MCF 10A (cell line): ENCODE measurements at regions of chr15 and their contacts with region 1.

Region 1: GRCh38 chr15:34209421-34210282 is at the start of gene KATNBL1:
- DNase-seq: peak; percentile 95
- H3K4me3 Mint-ChIP-seq: peak within 1 kb of the TSS; percentile 80
- H3K27ac Mint-ChIP-seq: peak within 1 kb of the TSS; percentile 93
- H3K4me1 Mint-ChIP-seq: peaks cover 17% of the 10 kb centered on the region
- H3K27me3 Mint-ChIP-seq: no peaks in the 10 kb centered on the region
- CTCF ChIP-seq: peak; percentile 77
- total RNA-seq, gene KATNBL1: 38.2 and 47.6 TPM in 2 replicates

Region 2: GRCh38 chr15:34055853-34056595 is 153.6 kb before region 1 on chr15:
- CTCF ChIA-PET with region 1: interaction called, 64 read pairs
- POLR2A ChIA-PET with region 1: interaction called, 13 read pairs
- intact Hi-C with region 1: no loop called
- DNase-seq: no peak
- H3K4me3 Mint-ChIP-seq: no peak overlapping the region
- H3K27ac Mint-ChIP-seq: no peak overlapping the region
- H3K4me1 Mint-ChIP-seq: no peaks in the 10 kb centered on the region
- H3K27me3 Mint-ChIP-seq: peaks cover 8% of the 10 kb centered on the region
- CTCF ChIP-seq: no peak

Region 3: DNA sequence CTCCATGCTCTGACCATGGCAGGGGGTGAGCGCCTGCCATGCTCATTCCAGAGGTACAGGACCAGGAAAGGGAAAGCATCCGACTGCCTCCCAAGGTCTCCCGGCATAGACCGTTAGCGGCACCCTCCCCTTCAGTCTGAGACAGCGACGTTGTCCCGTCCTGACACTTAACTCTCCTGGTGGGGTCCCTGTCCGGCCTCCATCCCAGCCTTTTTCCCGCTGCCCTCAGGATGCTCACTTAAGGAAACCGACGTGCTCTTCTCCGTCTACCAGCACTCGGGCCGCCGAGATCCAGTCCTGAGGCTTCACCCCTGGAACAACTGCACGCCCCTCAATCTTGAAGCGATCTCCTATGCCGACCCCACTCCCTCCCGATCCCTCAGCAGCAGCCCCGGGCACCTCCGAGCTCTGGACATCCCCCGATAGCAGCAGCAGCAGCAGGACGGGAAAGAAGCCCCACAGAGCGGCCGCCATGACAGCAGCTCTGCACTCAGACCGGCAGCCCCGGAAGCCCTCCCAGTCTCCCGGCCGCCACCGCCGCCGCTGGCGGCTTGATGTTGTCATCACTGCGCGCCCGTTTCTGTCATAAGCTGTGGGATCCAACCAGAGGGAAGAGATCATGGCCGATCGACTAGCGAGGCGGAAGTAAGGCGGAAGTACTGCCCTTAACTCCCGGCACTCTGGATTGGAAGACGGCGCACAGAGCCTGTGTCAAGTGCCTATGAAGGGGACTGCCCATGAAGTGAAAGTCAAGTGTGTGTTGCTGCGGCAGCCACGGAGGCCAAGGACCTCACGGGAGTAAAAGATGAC is 108.1 kb before region 1 on chr15 and contains the starts of genes EMC7 and PGBD4:
- CTCF ChIA-PET with region 1: interaction called, 3 read pairs
- POLR2A ChIA-PET with region 1: interaction called, 25 read pairs
- intact Hi-C with region 1: no loop called
- DNase-seq: peak; percentile 99
- H3K4me3 Mint-ChIP-seq: peak within 1 kb of the TSS; percentile 98
- H3K27ac Mint-ChIP-seq: peak within 1 kb of the TSS; percentile 99
- H3K4me1 Mint-ChIP-seq: peaks cover 5% of the 10 kb centered on the region
- H3K27me3 Mint-ChIP-seq: no peaks in the 10 kb centered on the region
- CTCF ChIP-seq: no peak
- total RNA-seq, gene EMC7: 98.2 and 134 TPM in 2 replicates
- total RNA-seq, gene PGBD4: 2.4 and 2.6 TPM in 2 replicates

Region 4: DNA sequence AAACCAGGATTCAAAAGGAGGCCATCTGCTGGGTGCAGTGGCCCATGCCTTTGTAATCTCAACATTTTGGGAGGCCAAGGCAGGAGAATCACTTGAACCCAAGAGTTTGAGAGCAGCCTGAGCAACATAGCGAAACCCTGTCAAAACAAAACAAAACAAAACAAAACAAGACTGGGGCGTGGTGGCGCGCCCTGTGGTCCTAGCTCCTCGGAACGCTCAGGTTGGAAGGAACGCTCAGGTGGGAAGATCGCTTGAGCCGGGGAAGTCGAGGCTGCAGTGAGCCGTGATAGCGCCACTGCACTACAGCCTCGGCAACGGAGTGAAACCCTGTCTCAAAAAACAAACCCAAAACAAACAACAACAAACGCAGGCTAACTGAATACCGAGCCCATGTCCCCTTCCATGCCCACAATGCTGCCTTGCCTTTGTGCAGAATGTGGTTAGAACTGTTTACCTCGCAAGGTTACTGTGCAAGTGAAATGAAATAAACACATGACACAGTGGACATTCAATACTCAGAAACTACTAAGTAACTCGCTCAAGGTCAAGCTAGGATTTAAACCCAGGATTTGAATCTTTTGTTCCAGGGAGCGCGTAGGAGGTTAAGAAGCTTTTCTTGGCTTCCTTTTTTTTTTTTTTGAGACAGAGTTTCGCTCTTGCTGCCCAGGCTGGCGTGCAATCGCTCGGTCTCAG is 14.4 kb after region 1 on chr15:
- CTCF ChIA-PET with region 1: interaction called, 7 read pairs
- POLR2A ChIA-PET with region 1: interaction called, 32 read pairs
- intact Hi-C with region 1: no loop called
- DNase-seq: peak; percentile 11
- H3K4me3 Mint-ChIP-seq: peak overlapping the region; percentile 99
- H3K27ac Mint-ChIP-seq: peak overlapping the region; percentile 99
- H3K4me1 Mint-ChIP-seq: peaks cover 5% of the 10 kb centered on the region
- H3K27me3 Mint-ChIP-seq: no peaks in the 10 kb centered on the region
- CTCF ChIP-seq: no peak

Region 5: DNA sequence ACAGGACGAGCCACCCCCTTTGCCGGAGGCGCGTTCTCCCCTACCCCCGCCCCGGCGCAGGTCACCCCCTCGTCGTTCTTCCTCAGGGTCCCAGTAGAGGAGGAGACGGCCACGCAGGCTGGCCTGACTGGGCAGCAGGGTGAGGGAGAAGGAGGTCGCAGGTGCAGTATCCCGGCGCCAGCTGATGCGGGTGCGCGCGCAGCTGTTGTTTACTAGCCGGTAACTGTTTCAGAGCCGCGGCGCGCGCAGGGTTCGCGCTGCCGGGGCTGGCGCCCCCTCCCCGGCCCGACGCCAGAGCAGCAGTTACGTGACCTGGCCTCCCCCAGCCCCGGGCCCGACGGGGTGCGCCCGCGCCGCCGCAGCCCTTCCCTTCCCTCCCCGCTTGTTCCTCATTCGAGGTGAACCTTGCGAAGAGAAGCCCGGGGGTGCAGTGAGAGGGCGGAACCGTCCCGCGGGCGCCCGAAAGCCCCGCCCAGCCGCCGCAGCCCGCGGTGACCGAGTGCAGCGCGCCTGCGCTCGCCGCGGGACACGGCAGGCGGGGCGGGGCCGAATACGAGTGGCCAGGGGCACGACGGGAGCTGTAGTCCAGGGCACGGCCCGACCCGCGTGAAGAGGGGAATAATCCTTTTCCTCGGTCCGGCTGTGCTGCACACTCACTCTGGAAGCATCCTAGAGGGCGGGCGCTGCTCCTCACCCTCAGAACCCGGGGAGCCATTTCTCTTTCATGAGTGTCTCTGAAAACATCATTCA is 128.1 kb after region 1 on chr15 and contains the start of gene SLC12A6:
- CTCF ChIA-PET with region 1: interaction called, 4 read pairs
- POLR2A ChIA-PET with region 1: interaction called, 17 read pairs
- intact Hi-C with region 1: no loop called
- DNase-seq: peak; percentile 88
- H3K4me3 Mint-ChIP-seq: peak within 1 kb of the TSS; percentile 83
- H3K27ac Mint-ChIP-seq: peak within 1 kb of the TSS; percentile 49
- H3K4me1 Mint-ChIP-seq: peaks cover 32% of the 10 kb centered on the region
- H3K27me3 Mint-ChIP-seq: no peaks in the 10 kb centered on the region
- CTCF ChIP-seq: no peak
- total RNA-seq, gene SLC12A6: 11.7 and 15.3 TPM in 2 replicates

Region 6: GRCh38 chr15:34587717-34588674 is 378.3 kb after region 1 on chr15:
- CTCF ChIA-PET with region 1: interaction called, 3 read pairs
- POLR2A ChIA-PET with region 1: interaction called, 3 read pairs
- intact Hi-C with region 1: loop called (anchors 2 kb)
- DNase-seq: peak; percentile 88
- H3K4me3 Mint-ChIP-seq: peak overlapping the region; percentile 73
- H3K27ac Mint-ChIP-seq: peak overlapping the region; percentile 52
- H3K4me1 Mint-ChIP-seq: no peaks in the 10 kb centered on the region
- H3K27me3 Mint-ChIP-seq: peaks cover 11% of the 10 kb centered on the region
- CTCF ChIP-seq: peak; percentile 70